ENCODE measurements at regions of chr10 and their contacts with region 1.

Region 1: GRCh38 chr10:33193057-33193700 is 141.3 kb downstream of the NRP1 start:
- DNase-seq: peak; percentile 85
- H3K4me3 ChIP-seq: no peak overlapping the region
- H3K4me3 Mint-ChIP-seq: no peak overlapping the region
- H3K27ac Mint-ChIP-seq: no peak overlapping the region
- H3K4me1 ChIP-seq: peaks cover 44% of the 10 kb centered on the region
- H3K4me1 Mint-ChIP-seq: peaks cover 39% of the 10 kb centered on the region
- H3K27me3 ChIP-seq: no peaks in the 10 kb centered on the region
- H3K27me3 Mint-ChIP-seq: no peaks in the 10 kb centered on the region
- CTCF ChIP-seq: peak; percentile 89 to 97

Region 2: GRCh38 chr10:32795598-32796183 is 397.5 kb before region 1 on chr10:
- CTCF ChIA-PET with region 1: no interaction called
- POLR2A ChIA-PET with region 1: no interaction called
- intact Hi-C with region 1: no loop called
- DNase-seq: peak in 1 of 2 experiments; percentile 45
- H3K4me3 ChIP-seq: no peak overlapping the region
- H3K4me3 Mint-ChIP-seq: no peak overlapping the region
- H3K27ac Mint-ChIP-seq: no peak overlapping the region
- H3K4me1 ChIP-seq: no peaks in the 10 kb centered on the region
- H3K4me1 Mint-ChIP-seq: no peaks in the 10 kb centered on the region
- H3K27me3 ChIP-seq: no peaks in the 10 kb centered on the region
- H3K27me3 Mint-ChIP-seq: peaks cover 5% of the 10 kb centered on the region
- CTCF ChIP-seq: peak; percentile 75 to 95

Region 3: DNA sequence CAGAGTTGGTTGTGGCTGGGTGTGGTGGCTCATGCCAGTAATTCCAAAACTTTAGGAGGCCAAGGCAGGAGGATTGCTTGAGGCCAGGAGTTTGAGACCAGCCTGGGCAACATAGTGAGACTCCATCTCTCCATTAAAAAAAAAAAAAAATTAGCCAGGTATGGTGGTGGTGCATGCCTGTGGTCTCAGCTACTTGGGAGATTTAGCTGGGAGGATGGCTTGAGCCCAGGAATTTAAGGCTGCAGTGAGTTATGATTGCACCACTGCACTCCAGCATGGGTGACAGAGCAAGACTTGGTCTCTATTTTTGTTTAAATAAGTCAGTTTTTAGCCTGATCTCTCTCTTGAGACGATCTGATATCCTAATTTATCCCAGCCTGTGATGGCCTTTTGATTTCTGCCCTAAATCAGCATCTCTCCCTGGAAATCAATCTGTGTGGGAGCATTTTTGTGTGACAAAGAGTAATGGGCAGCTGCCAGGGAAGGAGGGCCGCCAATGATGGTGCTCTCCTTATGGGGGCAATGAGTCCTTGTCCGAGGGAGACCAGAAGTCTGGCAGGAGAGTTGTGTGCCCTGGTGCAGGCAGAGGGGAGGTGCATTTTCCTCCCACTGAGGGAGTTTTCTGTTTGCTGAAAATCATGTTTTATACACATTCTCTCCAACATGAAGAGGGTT is 30.3 kb after region 1 on chr10:
- CTCF ChIA-PET with region 1: interaction called, 3 read pairs
- POLR2A ChIA-PET with region 1: interaction called, 3 read pairs
- intact Hi-C with region 1: loop called (anchors 1 kb)
- DNase-seq: no peak
- H3K4me3 ChIP-seq: no peak overlapping the region
- H3K4me3 Mint-ChIP-seq: peak overlapping the region; percentile 21
- H3K27ac Mint-ChIP-seq: peak overlapping the region; percentile 90
- H3K4me1 ChIP-seq: peaks cover 57% of the 10 kb centered on the region
- H3K4me1 Mint-ChIP-seq: peaks cover 45% of the 10 kb centered on the region
- H3K27me3 ChIP-seq: no peaks in the 10 kb centered on the region
- H3K27me3 Mint-ChIP-seq: no peaks in the 10 kb centered on the region
- CTCF ChIP-seq: no peak

Region 4: DNA sequence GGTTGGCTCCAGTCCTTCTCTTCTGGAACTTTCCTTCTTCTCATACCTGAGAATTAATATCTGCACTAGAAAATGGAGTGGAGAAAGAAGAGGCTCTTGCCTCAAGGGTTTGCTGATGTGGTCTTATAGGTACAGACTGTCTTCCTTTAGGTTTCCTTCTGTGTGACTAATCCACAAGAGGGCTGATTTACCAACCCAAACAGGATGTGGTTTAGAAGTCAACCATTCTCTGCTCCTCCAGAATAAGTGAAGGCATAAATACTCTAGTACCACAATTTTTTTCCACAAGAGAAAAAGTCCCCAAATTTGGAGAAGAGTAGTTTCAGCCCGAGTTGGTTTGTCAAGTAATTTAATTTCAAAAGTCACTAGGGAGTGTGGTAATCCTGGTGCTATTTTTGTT is 55.5 kb after region 1 on chr10:
- CTCF ChIA-PET with region 1: no interaction called
- POLR2A ChIA-PET with region 1: no interaction called
- intact Hi-C with region 1: no loop called
- DNase-seq: no peak
- H3K4me3 ChIP-seq: no peak overlapping the region
- H3K4me3 Mint-ChIP-seq: no peak overlapping the region
- H3K27ac Mint-ChIP-seq: no peak overlapping the region
- H3K4me1 ChIP-seq: peaks cover 13% of the 10 kb centered on the region
- H3K4me1 Mint-ChIP-seq: peaks cover 14% of the 10 kb centered on the region
- H3K27me3 ChIP-seq: no peaks in the 10 kb centered on the region
- H3K27me3 Mint-ChIP-seq: no peaks in the 10 kb centered on the region
- CTCF ChIP-seq: no peak

Region 5: GRCh38 chr10:33258967-33259366 is 65.8 kb after region 1 on chr10:
- CTCF ChIA-PET with region 1: no interaction called
- POLR2A ChIA-PET with region 1: no interaction called
- intact Hi-C with region 1: loop called (anchors 1 kb)
- DNase-seq: no peak
- H3K4me3 ChIP-seq: no peak overlapping the region
- H3K4me3 Mint-ChIP-seq: no peak overlapping the region
- H3K27ac Mint-ChIP-seq: peak overlapping the region; percentile 55
- H3K4me1 ChIP-seq: peaks cover 42% of the 10 kb centered on the region
- H3K4me1 Mint-ChIP-seq: peaks cover 38% of the 10 kb centered on the region
- H3K27me3 ChIP-seq: no peaks in the 10 kb centered on the region
- H3K27me3 Mint-ChIP-seq: no peaks in the 10 kb centered on the region
- CTCF ChIP-seq: no peak

Region 6: DNA sequence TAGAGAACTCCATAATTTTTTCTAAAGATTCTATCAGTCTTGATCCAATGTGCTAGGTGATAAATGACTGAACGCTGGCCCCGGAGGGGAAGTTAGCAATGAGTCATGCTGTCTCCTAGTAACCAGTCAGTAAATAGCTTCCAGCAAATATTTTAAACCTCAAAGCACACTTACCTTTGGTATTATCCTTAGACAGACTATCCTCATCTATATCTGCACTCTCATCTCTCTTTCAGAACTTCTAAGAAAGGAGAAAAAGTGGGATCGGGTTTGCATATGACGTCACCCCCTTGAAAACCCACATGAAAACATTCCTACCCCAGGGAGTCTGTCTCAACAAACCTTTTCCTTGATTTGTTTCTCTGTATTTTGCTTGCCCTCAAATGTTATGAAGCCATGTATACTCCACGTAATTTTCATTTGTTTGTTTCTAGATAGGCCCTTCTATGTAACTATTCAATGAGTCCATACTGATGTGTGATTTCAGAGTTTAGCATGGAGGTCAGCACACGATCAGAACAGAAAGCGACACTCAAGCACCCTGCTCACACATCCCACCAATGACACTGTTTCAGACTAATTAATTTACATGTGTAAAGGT is 316.2 kb after region 1 on chr10:
- CTCF ChIA-PET with region 1: no interaction called
- POLR2A ChIA-PET with region 1: no interaction called
- intact Hi-C with region 1: loop called (anchors 10 kb)
- DNase-seq: peak; percentile 91 to 92
- H3K4me3 ChIP-seq: no peak overlapping the region
- H3K4me3 Mint-ChIP-seq: peak overlapping the region; percentile 64
- H3K27ac Mint-ChIP-seq: peak overlapping the region; percentile 90
- H3K4me1 ChIP-seq: peaks cover 38% of the 10 kb centered on the region
- H3K4me1 Mint-ChIP-seq: peaks cover 22% of the 10 kb centered on the region
- H3K27me3 ChIP-seq: no peaks in the 10 kb centered on the region
- H3K27me3 Mint-ChIP-seq: no peaks in the 10 kb centered on the region
- CTCF ChIP-seq: no peak

Region 7: DNA sequence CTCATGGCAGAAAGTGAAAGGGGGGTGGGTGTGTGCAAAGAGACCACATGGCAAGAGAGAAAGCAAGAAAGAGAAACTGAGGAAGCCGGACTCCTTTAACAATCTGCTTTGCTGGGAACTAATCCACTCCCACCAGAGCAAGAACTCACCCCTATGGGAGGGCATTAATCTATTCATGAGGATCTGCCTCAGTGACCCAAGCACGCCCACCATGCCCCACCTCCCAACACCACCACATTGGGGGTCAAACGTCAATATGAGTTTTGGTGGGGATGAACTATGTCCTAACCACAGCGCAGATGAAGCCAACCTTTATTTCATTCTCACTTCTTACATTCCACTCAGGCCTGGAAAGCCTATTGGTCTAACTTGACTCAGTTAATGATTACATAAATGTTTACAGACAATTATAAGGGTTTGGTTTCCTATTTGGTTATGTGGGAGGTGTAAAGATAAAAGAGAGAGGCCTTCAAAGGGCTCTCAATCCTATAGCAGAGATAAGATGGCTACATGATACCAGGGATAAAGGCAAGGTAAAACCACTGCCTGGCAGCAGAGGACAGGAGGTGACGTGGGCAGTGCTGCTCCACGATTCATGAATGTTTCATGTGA is 1020.1 kb after region 1 on chr10:
- CTCF ChIA-PET with region 1: no interaction called
- POLR2A ChIA-PET with region 1: no interaction called
- intact Hi-C with region 1: loop called (anchors 10 kb)
- DNase-seq: peak; percentile 82 to 85
- H3K4me3 ChIP-seq: no peak overlapping the region
- H3K4me3 Mint-ChIP-seq: peak overlapping the region; percentile 51
- H3K27ac Mint-ChIP-seq: peak overlapping the region; percentile 79
- H3K4me1 ChIP-seq: peaks cover 47% of the 10 kb centered on the region
- H3K4me1 Mint-ChIP-seq: peaks cover 54% of the 10 kb centered on the region
- H3K27me3 ChIP-seq: no peaks in the 10 kb centered on the region
- H3K27me3 Mint-ChIP-seq: no peaks in the 10 kb centered on the region
- CTCF ChIP-seq: peak in 1 of 2 experiments; percentile 47

Measured in Caco-2 (cell line).